ENCODE measurements at regions of chr1 and their contacts with region 1.

Region 1: GRCh38 chr1:170929835-170930554 is 5.3 kb upstream of the MROH9 start:
- DNase-seq: peak in 4 of 14 experiments; percentile 9 to 53 (median 46)
- ATAC-seq: peak; percentile 58
- H3K4me3 ChIP-seq: no peak overlapping the region
- H3K4me3 Mint-ChIP-seq: no peak overlapping the region
- H3K27ac ChIP-seq: no peak overlapping the region
- H3K27ac Mint-ChIP-seq: no peak overlapping the region
- H3K4me1 ChIP-seq: no peaks in the 10 kb centered on the region
- H3K4me1 Mint-ChIP-seq: no peaks in the 10 kb centered on the region
- H3K27me3 ChIP-seq: no peaks in the 10 kb centered on the region
- H3K27me3 Mint-ChIP-seq: peaks cover 9% of the 10 kb centered on the region
- CTCF ChIP-seq: peak; percentile 79

Region 2: GRCh38 chr1:169933984-169934725 is 995.8 kb before region 1 on chr1:
- CTCF ChIA-PET with region 1: interaction called, 8 read pairs
- POLR2A ChIA-PET with region 1: no interaction called
- intact Hi-C with region 1: loop called (anchors 1 to 2 kb)
- DNase-seq: no peak
- ATAC-seq: no peak
- H3K4me3 ChIP-seq: no peak overlapping the region
- H3K4me3 Mint-ChIP-seq: no peak overlapping the region
- H3K27ac ChIP-seq: no peak overlapping the region
- H3K27ac Mint-ChIP-seq: no peak overlapping the region
- H3K4me1 ChIP-seq: no peaks in the 10 kb centered on the region
- H3K4me1 Mint-ChIP-seq: no peaks in the 10 kb centered on the region
- H3K27me3 ChIP-seq: no peaks in the 10 kb centered on the region
- H3K27me3 Mint-ChIP-seq: no peaks in the 10 kb centered on the region
- CTCF ChIP-seq: no peak

Region 3: GRCh38 chr1:170010443-170010842 is 919.6 kb before region 1 on chr1:
- CTCF ChIA-PET with region 1: interaction called, 3 read pairs
- POLR2A ChIA-PET with region 1: no interaction called
- intact Hi-C with region 1: loop called in 1 of 2 experiments (anchors 10 kb)
- DNase-seq: peak in 5 of 14 experiments; percentile 1 to 28 (median 26)
- ATAC-seq: no peak
- H3K4me3 ChIP-seq: no peak overlapping the region
- H3K4me3 Mint-ChIP-seq: no peak overlapping the region
- H3K27ac ChIP-seq: no peak overlapping the region
- H3K27ac Mint-ChIP-seq: no peak overlapping the region
- H3K4me1 ChIP-seq: no peaks in the 10 kb centered on the region
- H3K4me1 Mint-ChIP-seq: no peaks in the 10 kb centered on the region
- H3K27me3 ChIP-seq: no peaks in the 10 kb centered on the region
- H3K27me3 Mint-ChIP-seq: no peaks in the 10 kb centered on the region
- CTCF ChIP-seq: no peak

Region 4: GRCh38 chr1:170864238-170864637 is 65.8 kb before region 1 on chr1:
- CTCF ChIA-PET with region 1: no interaction called
- POLR2A ChIA-PET with region 1: no interaction called
- intact Hi-C with region 1: no loop called
- DNase-seq: no peak
- ATAC-seq: no peak
- H3K4me3 ChIP-seq: no peak overlapping the region
- H3K4me3 Mint-ChIP-seq: no peak overlapping the region
- H3K27ac ChIP-seq: no peak overlapping the region
- H3K27ac Mint-ChIP-seq: no peak overlapping the region
- H3K4me1 ChIP-seq: no peaks in the 10 kb centered on the region
- H3K4me1 Mint-ChIP-seq: no peaks in the 10 kb centered on the region
- H3K27me3 ChIP-seq: no peaks in the 10 kb centered on the region
- H3K27me3 Mint-ChIP-seq: peaks cover 5% of the 10 kb centered on the region
- CTCF ChIP-seq: no peak

Region 5: DNA sequence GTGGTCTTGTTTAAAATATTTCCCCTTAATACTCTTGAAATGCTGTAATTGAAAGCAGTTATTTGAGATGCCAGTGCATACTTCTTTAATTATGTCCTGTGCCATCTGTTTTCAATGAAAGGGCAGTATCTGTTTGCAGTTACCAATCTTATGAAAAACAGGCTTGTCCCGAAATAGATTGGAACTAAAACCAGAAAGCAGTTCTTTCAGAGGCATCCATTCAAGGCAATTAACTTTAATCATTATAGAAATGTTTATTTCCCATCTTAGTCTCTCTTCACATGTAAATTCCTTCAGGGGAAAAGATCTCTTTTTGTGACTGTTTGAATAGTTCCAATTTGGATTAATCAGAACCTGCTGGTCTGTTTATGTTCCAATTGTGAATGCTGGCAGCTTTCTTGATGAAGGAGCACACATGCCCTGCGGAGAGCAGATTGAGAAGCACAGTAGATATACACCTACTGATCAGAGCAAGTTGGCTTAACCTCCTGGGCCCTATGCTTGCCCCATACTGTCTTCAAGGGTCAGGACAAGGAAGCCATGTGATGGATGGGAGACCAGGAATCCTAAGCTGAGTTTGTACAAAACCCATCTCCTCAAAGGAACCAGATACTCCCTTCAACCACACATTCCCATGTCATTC is 36.2 kb before region 1 on chr1:
- CTCF ChIA-PET with region 1: no interaction called
- POLR2A ChIA-PET with region 1: no interaction called
- intact Hi-C with region 1: no loop called
- DNase-seq: no peak
- ATAC-seq: no peak
- H3K4me3 ChIP-seq: no peak overlapping the region
- H3K4me3 Mint-ChIP-seq: no peak overlapping the region
- H3K27ac ChIP-seq: no peak overlapping the region
- H3K27ac Mint-ChIP-seq: no peak overlapping the region
- H3K4me1 ChIP-seq: no peaks in the 10 kb centered on the region
- H3K4me1 Mint-ChIP-seq: no peaks in the 10 kb centered on the region
- H3K27me3 ChIP-seq: no peaks in the 10 kb centered on the region
- H3K27me3 Mint-ChIP-seq: peaks cover 34% of the 10 kb centered on the region
- CTCF ChIP-seq: no peak

Measured in CD4-positive, alpha-beta T cell (primary cell).